CD4-positive, alpha-beta memory T cell (primary cell): ENCODE measurements at regions of chr20 and their contacts with region 1.

Region 1: DNA sequence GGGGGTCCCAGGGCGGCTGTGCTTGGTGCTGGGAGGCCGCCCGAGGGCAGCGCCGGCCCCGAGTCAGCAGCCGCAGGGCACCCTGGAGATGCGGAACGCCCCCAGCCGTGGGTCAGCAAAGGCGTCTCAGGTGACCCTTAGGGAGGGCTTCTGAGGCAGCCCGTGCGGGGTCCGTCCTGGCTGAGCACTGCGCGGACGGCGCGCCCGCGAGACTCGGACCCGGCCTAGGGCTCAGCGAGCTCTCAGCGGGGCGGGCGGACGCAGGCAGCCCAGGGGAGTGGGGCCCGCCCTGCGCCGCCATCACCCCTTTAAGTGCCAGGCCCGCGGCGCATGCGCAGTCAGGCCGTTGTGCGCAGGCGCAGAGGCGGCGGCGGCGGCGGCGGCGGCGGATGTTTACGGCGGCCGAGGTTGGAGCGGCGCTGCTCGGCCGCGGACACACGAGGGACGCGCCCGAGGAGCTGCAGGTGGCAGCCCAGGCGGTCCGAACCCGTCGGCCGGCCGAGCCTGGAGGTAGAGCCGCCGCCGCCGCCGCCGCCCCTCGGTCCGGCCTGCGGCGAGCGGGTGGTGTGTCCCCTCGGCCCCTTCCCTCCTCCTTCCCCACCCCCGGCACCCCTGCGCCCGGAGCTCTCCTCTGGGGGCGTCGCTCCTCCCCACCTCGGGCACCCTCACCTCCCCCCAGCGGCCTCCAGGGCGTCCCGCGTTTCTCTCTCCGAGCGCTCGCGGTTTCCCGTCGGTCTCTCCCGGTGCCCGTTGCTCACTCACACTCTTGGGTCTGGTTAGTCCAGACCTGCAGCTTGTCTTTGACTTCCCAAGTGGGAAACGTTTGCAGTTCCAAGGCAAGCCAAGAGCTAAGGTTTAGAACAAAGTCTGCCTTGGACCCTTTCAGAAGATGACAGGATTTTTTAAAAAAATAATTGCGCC is at the start of gene PCMTD2:
- DNase-seq: peak; percentile 76 to 93 (median 86)
- H3K4me3 ChIP-seq: peak within 1 kb of the TSS; percentile 73 to 77
- H3K4me3 Mint-ChIP-seq: peak within 1 kb of the TSS; percentile 90 to 97 (median 94)
- H3K27ac ChIP-seq: peak within 1 kb of the TSS; percentile 63
- H3K27ac Mint-ChIP-seq: peak within 1 kb of the TSS; percentile 92 to 99 (median 94)
- H3K4me1 ChIP-seq: peaks cover 55% of the 10 kb centered on the region
- H3K4me1 Mint-ChIP-seq: peaks cover 43 to 62% (median 50%) of the 10 kb centered on the region in 4 donors
- H3K27me3 ChIP-seq: peaks cover 5% of the 10 kb centered on the region
- H3K27me3 Mint-ChIP-seq: peaks cover 2 to 5% of the 10 kb centered on the region in 2 donors
- total RNA-seq, gene PCMTD2: 187 to 196 TPM

Region 2: DNA sequence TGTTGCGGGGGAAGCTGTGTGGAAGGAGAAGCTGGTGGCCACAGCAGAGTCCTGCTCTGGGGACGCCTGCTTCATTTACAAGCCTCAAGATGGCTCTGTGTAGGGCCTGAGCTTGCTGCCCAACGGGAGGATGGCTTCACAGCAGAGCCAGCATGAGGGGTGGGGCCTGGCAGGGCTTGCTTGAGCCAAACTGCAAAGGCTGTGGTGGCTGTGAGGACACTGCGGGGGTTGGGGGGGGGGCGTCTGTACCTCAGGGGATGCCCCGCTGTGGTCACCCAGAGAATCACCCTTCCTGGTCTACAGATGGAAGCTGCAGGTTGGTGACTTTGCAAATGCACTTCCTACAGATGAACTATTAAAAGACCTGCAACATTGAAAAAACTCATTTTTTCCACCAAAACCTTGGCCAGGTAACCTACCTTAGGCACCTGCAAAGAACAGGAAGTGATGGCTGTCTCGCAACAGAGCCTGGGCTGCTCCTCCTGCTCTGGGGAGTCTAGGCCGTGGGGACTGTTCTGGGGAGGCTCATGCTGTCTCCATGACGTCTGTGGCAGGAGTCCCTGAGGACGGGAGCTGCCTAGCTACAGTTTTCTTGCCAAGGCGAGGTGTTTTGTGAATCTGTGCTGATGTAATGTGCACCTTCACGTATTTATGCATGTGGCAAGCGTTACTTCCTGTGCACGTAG is 155.6 kb before region 1 on chr20:
- CTCF ChIA-PET with region 1: no interaction called
- POLR2A ChIA-PET with region 1: no interaction called
- intact Hi-C with region 1: no loop called
- DNase-seq: peak in 2 of 5 donors; percentile 29 to 72
- H3K4me3 ChIP-seq: no peak overlapping the region
- H3K4me3 Mint-ChIP-seq: peak overlapping the region in 3 of 8 donors; percentile 20 to 36 (median 32)
- H3K27ac ChIP-seq: no peak overlapping the region
- H3K27ac Mint-ChIP-seq: peak overlapping the region in 2 of 7 donors; percentile 22 to 40
- H3K4me1 ChIP-seq: peaks cover 20% of the 10 kb centered on the region
- H3K4me1 Mint-ChIP-seq: peaks cover 4 to 20% (median 7%) of the 10 kb centered on the region in 4 donors
- H3K27me3 ChIP-seq: peaks cover 11% of the 10 kb centered on the region
- H3K27me3 Mint-ChIP-seq: peaks cover 12 to 15% of the 10 kb centered on the region in 2 donors

Region 3: GRCh38 chr20:64223526-64224067 is 32.0 kb before region 1 on chr20:
- CTCF ChIA-PET with region 1: interaction called, 3 read pairs
- POLR2A ChIA-PET with region 1: interaction called, 15 read pairs
- intact Hi-C with region 1: no loop called
- DNase-seq: peak in 1 of 5 donors; percentile 17
- H3K4me3 ChIP-seq: no peak overlapping the region
- H3K4me3 Mint-ChIP-seq: no peak overlapping the region
- H3K27ac ChIP-seq: no peak overlapping the region
- H3K27ac Mint-ChIP-seq: peak overlapping the region in 2 of 7 donors; percentile 48 to 56
- H3K4me1 ChIP-seq: peaks cover 60% of the 10 kb centered on the region
- H3K4me1 Mint-ChIP-seq: peaks cover 20 to 63% (median 38%) of the 10 kb centered on the region in 4 donors
- H3K27me3 ChIP-seq: no peaks in the 10 kb centered on the region
- H3K27me3 Mint-ChIP-seq: peaks cover 0 to 4% of the 10 kb centered on the region in 2 donors

Region 4: DNA sequence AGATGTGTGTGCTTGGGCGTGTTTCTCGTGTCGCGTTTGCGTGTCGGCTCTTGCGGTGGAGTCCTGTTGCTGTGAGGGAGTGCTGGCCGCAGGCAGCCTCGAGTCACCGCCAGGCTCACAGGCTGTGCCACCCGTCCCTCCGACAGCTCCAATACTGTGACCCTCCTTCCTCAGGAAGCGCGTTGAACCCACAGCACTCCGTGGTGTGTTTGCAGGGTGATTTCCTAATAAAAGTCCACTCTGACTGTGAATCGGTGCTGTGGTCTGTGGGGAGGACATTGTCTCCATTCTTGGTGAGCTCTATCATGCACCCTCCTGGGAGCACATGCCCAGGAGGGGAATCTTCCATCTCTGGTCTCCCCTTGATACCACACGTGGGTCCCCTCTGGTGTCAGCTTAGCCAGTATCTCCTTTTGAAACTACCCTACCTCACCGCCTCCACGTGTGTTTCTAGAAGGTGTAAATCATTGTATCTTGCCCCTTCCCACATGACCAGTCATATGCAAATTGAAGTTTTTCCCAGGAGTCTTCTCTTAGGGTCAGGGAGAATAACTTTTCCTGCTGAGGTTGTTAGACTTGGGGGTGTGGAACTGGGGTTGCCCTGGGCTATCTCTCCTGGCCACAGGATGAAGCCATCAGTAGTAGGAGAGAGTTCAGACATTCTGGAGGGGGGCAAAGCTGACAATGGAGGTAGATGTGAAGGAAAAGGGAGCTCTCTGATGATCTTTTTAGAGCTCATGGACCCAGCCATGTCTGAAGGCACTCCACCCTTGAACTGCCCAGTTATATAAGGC is 13.4 kb before region 1 on chr20:
- CTCF ChIA-PET with region 1: no interaction called
- POLR2A ChIA-PET with region 1: interaction called, 11 read pairs
- intact Hi-C with region 1: no loop called
- DNase-seq: no peak
- H3K4me3 ChIP-seq: no peak overlapping the region
- H3K4me3 Mint-ChIP-seq: no peak overlapping the region
- H3K27ac ChIP-seq: no peak overlapping the region
- H3K27ac Mint-ChIP-seq: no peak overlapping the region
- H3K4me1 ChIP-seq: peaks cover 9% of the 10 kb centered on the region
- H3K4me1 Mint-ChIP-seq: peaks cover 1 to 10% (median 3%) of the 10 kb centered on the region in 4 donors
- H3K27me3 ChIP-seq: no peaks in the 10 kb centered on the region
- H3K27me3 Mint-ChIP-seq: peaks cover 9 to 10% of the 10 kb centered on the region in 2 donors